ENCODE measurements at regions of chrX and their contacts with region 1.

Region 1: DNA sequence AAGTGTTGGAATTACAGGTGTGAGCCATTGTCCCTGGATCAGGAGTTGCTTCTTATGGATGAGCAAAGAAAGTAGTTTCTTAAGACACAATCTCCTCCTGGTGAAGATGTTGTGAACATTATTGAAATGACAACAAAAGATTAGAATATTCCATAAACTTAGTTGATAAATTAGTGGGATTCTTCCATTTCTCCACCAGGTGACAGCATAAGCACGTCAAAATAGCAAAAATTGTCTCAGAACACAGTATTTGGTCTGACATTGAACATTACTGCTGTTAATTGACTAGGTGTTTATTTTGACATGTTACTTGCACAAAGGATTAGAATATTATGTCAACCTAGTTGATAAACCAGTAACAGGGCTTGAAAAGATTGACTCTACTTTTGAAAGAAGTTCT is 21.6 kb downstream of the CLDN34 start:
- DNase-seq: peak; percentile 54
- H3K4me3 Mint-ChIP-seq: no peak overlapping the region
- H3K27ac Mint-ChIP-seq: no peak overlapping the region
- H3K4me1 Mint-ChIP-seq: no peaks in the 10 kb centered on the region
- H3K27me3 Mint-ChIP-seq: peaks cover 11% of the 10 kb centered on the region
- CTCF ChIP-seq: peak; percentile 70

Region 2: DNA sequence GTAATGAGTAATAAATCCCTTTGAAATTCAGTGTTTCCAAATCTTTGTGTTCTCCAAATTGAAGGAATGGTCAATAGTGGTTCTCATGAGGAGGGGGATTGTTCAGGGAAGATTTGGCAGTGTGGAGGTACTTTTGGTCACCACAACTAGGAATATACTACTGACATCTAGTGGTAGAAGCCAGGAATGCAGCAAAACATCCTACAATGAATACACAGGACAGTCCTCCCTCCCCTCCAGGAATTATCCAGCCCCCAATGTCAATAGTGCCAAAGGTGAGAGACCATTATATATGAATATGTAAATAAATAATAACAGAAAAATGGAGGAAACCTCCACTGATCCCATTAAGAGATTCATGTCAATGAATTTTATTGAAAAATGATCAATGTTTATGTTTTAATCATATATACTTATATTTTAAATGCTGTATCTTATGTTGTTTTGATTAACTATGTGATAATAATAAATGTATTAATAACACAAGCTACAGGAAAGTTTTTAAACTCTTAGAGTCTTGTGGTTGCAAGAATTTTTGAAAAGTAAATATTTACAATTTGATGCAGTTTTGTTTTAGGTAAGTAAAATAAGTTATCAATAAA is 1173.2 kb before region 1 on chrX:
- CTCF ChIA-PET with region 1: no interaction called
- POLR2A ChIA-PET with region 1: no interaction called
- intact Hi-C with region 1: loop called (anchors 10 kb)
- DNase-seq: peak; percentile 71
- H3K4me3 Mint-ChIP-seq: no peak overlapping the region
- H3K27ac Mint-ChIP-seq: no peak overlapping the region
- H3K4me1 Mint-ChIP-seq: no peaks in the 10 kb centered on the region
- H3K27me3 Mint-ChIP-seq: peaks cover 16% of the 10 kb centered on the region
- CTCF ChIP-seq: peak; percentile 59

Region 3: GRCh38 chrX:9865804-9866471 is 122.8 kb before region 1 on chrX:
- CTCF ChIA-PET with region 1: no interaction called
- POLR2A ChIA-PET with region 1: no interaction called
- intact Hi-C with region 1: no loop called
- DNase-seq: peak; percentile 79
- H3K4me3 Mint-ChIP-seq: no peak overlapping the region
- H3K27ac Mint-ChIP-seq: no peak overlapping the region
- H3K4me1 Mint-ChIP-seq: peaks cover 11% of the 10 kb centered on the region
- H3K27me3 Mint-ChIP-seq: no peaks in the 10 kb centered on the region
- CTCF ChIP-seq: no peak

Region 4: GRCh38 chrX:9885150-9885549 is 103.6 kb before region 1 on chrX:
- CTCF ChIA-PET with region 1: interaction called, 10 read pairs
- POLR2A ChIA-PET with region 1: interaction called, 3 read pairs
- intact Hi-C with region 1: loop called (anchors 1 kb)
- DNase-seq: peak; percentile 78
- H3K4me3 Mint-ChIP-seq: no peak overlapping the region
- H3K27ac Mint-ChIP-seq: no peak overlapping the region
- H3K4me1 Mint-ChIP-seq: peaks cover 11% of the 10 kb centered on the region
- H3K27me3 Mint-ChIP-seq: no peaks in the 10 kb centered on the region
- CTCF ChIP-seq: peak; percentile 70

Region 5: GRCh38 chrX:10173316-10173900 is 184.6 kb after region 1 on chrX:
- CTCF ChIA-PET with region 1: no interaction called
- POLR2A ChIA-PET with region 1: no interaction called
- intact Hi-C with region 1: loop called (anchors 5 kb)
- DNase-seq: peak; percentile 97
- H3K4me3 Mint-ChIP-seq: peak overlapping the region; percentile 61
- H3K27ac Mint-ChIP-seq: peak overlapping the region; percentile 20
- H3K4me1 Mint-ChIP-seq: peaks cover 32% of the 10 kb centered on the region
- H3K27me3 Mint-ChIP-seq: peaks cover 24% of the 10 kb centered on the region
- CTCF ChIP-seq: no peak

Region 6: DNA sequence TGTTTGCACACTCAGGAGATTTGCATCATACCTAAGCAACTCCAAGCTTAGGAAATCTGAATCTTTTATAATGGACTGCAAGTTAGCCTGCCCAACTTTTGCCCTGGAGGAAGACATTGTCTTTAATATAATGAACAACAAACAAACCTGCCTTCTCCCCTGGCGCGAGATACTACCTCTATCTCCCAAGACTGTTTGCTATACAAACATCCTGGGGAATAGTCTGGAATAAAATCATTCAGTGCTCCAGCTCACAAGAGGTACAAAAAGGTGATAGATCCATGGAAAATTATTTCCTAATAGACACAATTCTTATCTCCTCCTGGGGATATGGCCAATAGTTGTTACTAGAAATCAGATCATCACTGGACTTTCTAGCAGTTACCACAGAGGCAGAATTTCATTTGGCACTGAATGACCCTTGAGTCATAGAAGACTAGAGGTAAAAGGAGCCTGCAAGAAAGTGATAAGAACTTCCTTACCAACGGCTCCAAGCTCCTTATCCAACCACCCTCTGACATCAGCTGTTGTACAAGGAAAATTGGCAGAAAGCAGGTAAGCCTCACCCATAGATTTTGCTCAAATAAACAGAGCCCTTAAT is 593.5 kb after region 1 on chrX:
- CTCF ChIA-PET with region 1: no interaction called
- POLR2A ChIA-PET with region 1: no interaction called
- intact Hi-C with region 1: no loop called
- DNase-seq: no peak
- H3K4me3 Mint-ChIP-seq: no peak overlapping the region
- H3K27ac Mint-ChIP-seq: peak overlapping the region; percentile 61
- H3K4me1 Mint-ChIP-seq: peaks cover 15% of the 10 kb centered on the region
- H3K27me3 Mint-ChIP-seq: no peaks in the 10 kb centered on the region
- CTCF ChIP-seq: no peak

Measured in MCF 10A (cell line).